BJ (cell line): ENCODE measurements at regions of chr3 and their contacts with region 1.

Region 1: DNA sequence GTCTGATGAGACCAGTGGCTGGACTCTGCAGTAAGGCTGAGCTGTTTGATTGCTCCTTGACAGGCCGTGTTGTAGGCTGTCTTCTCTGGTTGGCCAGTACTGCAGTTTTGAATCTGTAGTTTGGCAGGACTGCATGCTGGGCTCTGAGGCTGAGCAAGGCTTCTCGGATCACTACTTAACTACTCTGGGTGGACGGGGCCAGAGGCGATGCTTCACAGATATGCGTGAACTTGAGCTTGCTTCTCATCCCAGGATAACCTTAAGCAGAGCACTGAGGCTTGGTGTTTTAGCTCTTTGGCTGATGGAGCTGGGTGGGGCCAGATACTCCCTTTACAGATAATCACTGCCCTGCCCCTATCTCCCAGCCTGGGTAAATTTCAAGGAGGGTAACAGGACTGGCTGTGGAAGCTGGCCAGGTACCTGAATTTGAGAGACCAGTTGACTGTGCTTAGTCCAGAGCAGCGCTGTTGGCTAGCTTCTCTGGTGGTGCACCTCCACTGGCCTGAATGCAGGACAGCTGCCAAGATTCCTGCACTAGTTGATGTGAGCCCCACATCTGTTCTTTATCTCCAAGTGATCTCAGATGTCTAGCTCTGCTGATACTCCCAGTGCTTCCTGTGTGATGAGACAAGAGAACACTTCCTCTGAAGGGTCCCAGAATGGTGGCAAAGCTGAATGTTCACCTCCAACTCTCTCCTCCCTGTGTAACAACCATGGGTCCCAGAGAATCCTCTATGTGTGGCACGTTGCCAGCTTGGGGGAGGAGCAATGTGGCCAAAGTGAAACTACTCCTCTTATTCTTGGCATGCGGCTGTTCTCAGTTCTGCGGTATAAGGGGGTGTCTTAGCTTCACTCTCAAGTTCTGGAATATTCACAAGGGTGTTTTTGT is 37.9 kb downstream of the RPL39L start:
- DNase-seq: peak; percentile 37
- H3K4me3 ChIP-seq: peak overlapping the region; percentile 22
- H3K27me3 ChIP-seq: no peaks in the 10 kb centered on the region
- CTCF ChIP-seq: no peak

Region 2: DNA sequence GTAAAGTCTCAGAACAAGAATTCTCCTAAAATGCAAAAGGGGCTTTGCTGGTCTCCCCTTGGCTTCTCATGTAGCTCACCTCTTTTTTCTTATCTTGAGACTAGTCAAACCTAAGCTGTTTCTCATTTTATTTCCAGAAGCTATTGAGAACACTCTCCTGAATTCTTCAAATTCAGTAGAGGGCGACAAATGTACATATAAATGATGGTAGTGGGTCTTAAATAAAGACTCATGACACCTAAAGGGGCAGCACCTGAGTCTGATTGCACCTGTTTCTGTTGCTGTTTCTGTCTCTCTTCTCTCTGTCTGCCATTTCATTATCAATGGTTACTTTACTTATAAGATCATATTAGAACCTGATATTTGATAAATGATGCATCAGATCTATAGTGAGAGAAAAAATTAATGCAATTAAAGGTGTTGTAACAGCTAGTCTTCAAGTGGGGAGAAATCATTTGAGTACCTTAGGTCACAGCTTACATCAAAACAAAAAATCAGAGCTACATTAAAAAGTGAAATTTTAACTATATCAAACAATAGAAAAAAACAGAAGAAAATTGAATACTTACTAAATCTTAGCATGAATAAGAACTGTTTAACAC is 252.0 kb before region 1 on chr3:
- CTCF ChIA-PET with region 1: no interaction called
- POLR2A ChIA-PET with region 1: interaction called, 13 read pairs
- DNase-seq: peak; percentile 4
- H3K4me3 ChIP-seq: no peak overlapping the region
- H3K27me3 ChIP-seq: peaks cover 10% of the 10 kb centered on the region
- CTCF ChIP-seq: peak; percentile 28

Region 3: DNA sequence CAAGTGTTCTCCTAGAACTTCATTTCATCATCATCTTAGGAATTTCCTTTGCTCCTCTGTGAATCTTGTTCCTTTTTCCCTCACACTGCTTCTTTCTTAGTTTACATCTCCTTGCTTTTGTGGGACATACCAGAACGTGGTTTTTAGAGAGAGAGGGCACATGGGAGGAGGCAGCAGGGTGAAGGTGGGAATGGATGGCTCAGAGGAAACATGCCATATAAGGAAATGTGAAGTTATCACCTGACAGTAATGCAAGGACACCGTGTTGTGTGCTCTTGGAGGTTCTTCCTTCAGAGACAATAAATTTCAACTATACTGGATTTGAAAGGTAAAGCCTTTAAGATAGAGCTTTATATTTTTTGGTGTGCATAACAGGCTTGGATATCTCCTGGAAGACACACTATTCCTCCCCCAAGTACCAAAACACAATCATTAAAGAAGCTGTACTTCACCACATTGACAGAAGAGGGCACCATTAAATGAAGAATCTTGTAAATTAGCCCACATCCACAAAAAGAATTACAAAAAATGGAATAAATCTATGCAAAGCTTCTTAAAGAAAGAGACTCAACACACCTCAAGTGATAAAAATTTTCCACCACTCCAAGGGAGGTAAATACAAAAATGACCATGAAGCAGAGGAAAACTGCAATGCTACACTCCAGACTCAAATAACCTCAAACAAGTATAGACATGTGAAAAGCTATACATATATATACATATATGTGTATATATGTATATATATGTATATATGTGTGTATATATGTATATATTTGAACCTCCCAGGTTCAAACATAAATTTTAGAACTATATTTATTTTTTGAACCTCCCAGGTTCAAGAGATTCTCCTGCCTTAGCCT is 11.7 kb after region 1 on chr3:
- CTCF ChIA-PET with region 1: interaction called, 20 read pairs
- POLR2A ChIA-PET with region 1: no interaction called
- DNase-seq: no peak
- H3K4me3 ChIP-seq: no peak overlapping the region
- H3K27me3 ChIP-seq: no peaks in the 10 kb centered on the region
- CTCF ChIP-seq: peak; percentile 56